GM12878 (cell line): ENCODE measurements at regions of chr3 and their contacts with region 1.

Region 1: DNA sequence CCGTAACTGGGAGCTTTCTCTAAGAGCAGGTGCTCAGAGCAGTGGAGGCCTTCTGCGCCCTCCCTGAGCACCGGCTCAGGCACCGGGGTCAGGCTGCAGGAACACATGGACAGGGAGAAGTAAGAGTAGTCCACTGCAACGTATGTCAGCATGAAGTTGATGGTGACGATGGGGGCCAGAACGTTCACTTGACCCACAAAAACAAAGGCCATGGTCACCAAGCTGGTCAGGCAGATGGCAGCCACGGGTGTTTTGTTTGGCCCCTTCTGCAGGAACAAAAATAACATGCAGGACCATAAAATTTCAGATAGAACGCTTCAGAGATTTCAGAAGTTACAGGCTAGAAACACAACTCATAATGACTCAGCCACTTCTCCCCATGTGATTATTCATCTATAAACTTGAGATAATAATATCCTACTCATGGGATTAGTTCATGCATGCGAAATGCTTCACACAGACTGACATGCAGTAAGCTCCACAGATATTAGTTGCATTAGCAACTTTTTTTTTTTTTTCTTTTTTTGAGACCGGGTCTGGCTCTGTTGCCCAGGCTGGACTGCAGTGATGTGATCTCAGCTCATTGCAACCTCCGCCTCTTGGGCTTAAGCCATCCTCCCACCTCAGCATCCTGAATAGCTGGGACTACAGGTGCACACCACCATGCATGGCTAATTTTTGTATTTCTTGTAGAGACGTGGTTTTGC is 52.2 kb upstream of the HEG1 start:
- DNase-seq: peak; percentile 86
- ATAC-seq: peak; percentile 73
- H3K4me3 ChIP-seq: peak overlapping the region; percentile 82
- H3K27ac ChIP-seq: peak overlapping the region; percentile 93
- H3K4me1 ChIP-seq: peaks cover 39% of the 10 kb centered on the region
- H3K27me3 ChIP-seq: no peaks in the 10 kb centered on the region
- CTCF ChIP-seq: no peak
- EP300 ChIP-seq: peak; percentile 8 to 65; a peak in 1 of 4 replicates
- POLR2A ChIP-seq: peak; percentile 62; the same call in 1 of the 2 replicates
- RAD21 ChIP-seq: no peak

Region 2: GRCh38 chr3:124935264-124935663 is 172.8 kb before region 1 on chr3:
- CTCF ChIA-PET with region 1: interaction called, 5 read pairs
- POLR2A ChIA-PET with region 1: interaction called, 5 read pairs
- RAD21 ChIA-PET with region 1: interaction called, 13 read pairs
- SMC1A ChIA-PET with region 1: interaction called, 12 read pairs
- in situ Hi-C with region 1: no loop called
- intact Hi-C with region 1: no loop called
- DNase-seq: no peak
- ATAC-seq: peak; percentile 89
- H3K4me3 ChIP-seq: no peak overlapping the region
- H3K27ac ChIP-seq: no peak overlapping the region
- H3K4me1 ChIP-seq: no peaks in the 10 kb centered on the region
- H3K27me3 ChIP-seq: no peaks in the 10 kb centered on the region; a peak in 1 of 4 replicates
- CTCF ChIP-seq: no peak
- EP300 ChIP-seq: no peak
- POLR2A ChIP-seq: no peak
- RAD21 ChIP-seq: no peak

Region 3: GRCh38 chr3:125119752-125120378 is 11.9 kb after region 1 on chr3:
- CTCF ChIA-PET with region 1: interaction called, 42 read pairs
- POLR2A ChIA-PET with region 1: interaction called, 45 read pairs
- RAD21 ChIA-PET with region 1: interaction called, 76 read pairs
- SMC1A ChIA-PET with region 1: interaction called, 127 read pairs
- in situ Hi-C with region 1: no loop called
- intact Hi-C with region 1: no loop called
- DNase-seq: peak; percentile 87
- ATAC-seq: peak; percentile 80
- H3K4me3 ChIP-seq: peak overlapping the region; percentile 60
- H3K27ac ChIP-seq: peak overlapping the region; percentile 97
- H3K4me1 ChIP-seq: peaks cover 76% of the 10 kb centered on the region
- H3K27me3 ChIP-seq: no peaks in the 10 kb centered on the region
- CTCF ChIP-seq: no peak
- EP300 ChIP-seq: peak; percentile 18 to 68; a peak in 1 of 4 replicates
- POLR2A ChIP-seq: no peak; the same call in 1 of the 2 replicates
- RAD21 ChIP-seq: no peak

Region 4: DNA sequence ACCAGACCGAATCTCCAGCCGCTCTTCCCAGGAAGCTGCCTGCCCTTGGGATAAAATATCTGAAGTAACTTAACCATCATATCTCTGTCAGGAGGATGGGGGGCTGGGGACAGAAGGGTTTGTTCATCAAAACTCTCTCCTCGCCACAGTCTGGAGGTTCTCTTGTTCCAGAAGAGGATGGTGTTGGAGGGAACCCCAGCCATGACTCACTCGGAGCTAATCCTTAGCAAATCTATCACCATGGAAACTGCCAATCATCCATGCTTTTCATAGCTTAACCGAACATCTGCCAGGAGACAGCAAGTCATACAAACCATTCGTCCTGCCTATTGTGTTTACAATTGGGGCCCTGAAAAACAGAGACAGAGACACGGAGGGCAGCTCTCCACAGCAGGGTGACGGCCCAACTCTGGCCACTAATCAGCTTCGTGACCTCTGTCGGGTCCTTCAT is 21.5 kb after region 1 on chr3:
- CTCF ChIA-PET with region 1: interaction called, 5 read pairs
- POLR2A ChIA-PET with region 1: interaction called, 4 read pairs
- RAD21 ChIA-PET with region 1: interaction called, 7 read pairs
- SMC1A ChIA-PET with region 1: interaction called, 55 read pairs
- in situ Hi-C with region 1: no loop called
- intact Hi-C with region 1: no loop called
- DNase-seq: no peak
- ATAC-seq: no peak
- H3K4me3 ChIP-seq: no peak overlapping the region
- H3K27ac ChIP-seq: no peak overlapping the region; the same call in 1 of the 2 replicates
- H3K4me1 ChIP-seq: peaks cover 54% of the 10 kb centered on the region
- H3K27me3 ChIP-seq: no peaks in the 10 kb centered on the region
- CTCF ChIP-seq: no peak
- EP300 ChIP-seq: no peak
- POLR2A ChIP-seq: no peak
- RAD21 ChIP-seq: no peak

Region 5: DNA sequence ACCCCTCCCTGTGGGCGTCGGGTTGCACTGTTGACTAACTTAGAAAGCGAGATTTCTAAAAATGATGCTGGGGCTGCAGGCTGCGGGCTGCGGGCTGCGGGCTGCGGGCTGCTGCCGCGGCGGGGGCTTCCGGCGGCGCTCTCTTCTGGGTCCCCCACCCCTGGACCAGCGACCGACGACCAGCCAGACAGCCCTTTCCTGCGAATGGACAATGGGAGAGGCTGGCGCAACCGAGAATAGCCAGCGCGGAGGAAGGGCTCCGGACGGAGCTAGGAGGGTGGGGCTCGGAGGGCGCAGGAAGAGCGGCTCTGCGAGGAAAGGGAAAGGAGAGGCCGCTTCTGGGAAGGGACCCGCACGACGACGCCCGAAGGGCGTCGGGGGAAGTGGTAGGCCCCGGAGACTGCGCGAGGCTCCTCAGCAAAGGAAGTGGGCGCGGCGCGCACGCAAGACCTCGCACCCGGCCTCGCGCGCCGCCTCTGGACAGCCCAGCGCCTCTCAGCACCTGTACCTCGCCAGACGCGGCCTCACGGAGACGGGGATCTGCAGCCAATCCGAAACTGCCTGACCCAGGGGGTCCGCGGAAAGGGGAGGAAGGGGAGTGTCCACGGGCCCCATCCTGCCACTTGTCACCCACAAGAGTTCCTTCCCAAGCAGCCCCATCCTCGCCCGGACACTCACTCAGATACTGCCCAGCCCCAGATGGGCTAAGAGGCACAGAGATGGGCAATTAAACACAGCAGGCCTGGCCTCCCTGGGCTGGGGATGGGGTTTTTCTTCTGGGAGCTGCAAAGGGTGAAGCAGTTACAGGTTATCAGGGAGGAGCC is 33.8 kb after region 1 on chr3:
- CTCF ChIA-PET with region 1: interaction called, 10 read pairs
- POLR2A ChIA-PET with region 1: interaction called, 4 read pairs
- RAD21 ChIA-PET with region 1: interaction called, 16 read pairs
- SMC1A ChIA-PET with region 1: interaction called, 55 read pairs
- in situ Hi-C with region 1: no loop called
- intact Hi-C with region 1: loop called (anchors 1 kb)
- DNase-seq: no peak
- ATAC-seq: peak; percentile 88
- H3K4me3 ChIP-seq: peak overlapping the region; percentile 60; the same call in 1 of the 2 replicates
- H3K27ac ChIP-seq: peak overlapping the region; percentile 95
- H3K4me1 ChIP-seq: peaks cover 92% of the 10 kb centered on the region
- H3K27me3 ChIP-seq: no peaks in the 10 kb centered on the region
- CTCF ChIP-seq: peak; percentile 47 to 54 (median 54)
- EP300 ChIP-seq: peak; percentile 88; a peak in 3 of 4 replicates
- POLR2A ChIP-seq: peak; percentile 60; the same call in 1 of the 2 replicates
- RAD21 ChIP-seq: peak; percentile 46